HepG2 (cell line): ENCODE measurements at regions of chr5 and their contacts with region 1.

Region 1: GRCh38 chr5:65481635-65482295 is at the start of gene ADAMTS6:
- DNase-seq: peak; percentile 70
- ATAC-seq: peak; percentile 86
- H3K4me3 ChIP-seq: peak within 1 kb of the TSS; percentile 61 to 73 (median 67)
- H3K27ac ChIP-seq: peak within 1 kb of the TSS; percentile 56
- H3K4me1 ChIP-seq: peaks cover 17% of the 10 kb centered on the region
- H3K27me3 ChIP-seq: no peaks in the 10 kb centered on the region; a peak in 1 of 5 replicates
- CTCF ChIP-seq: no peak
- EP300 ChIP-seq: no peak
- POLR2A ChIP-seq: peak in 1 of 2 experiments; percentile 24; a peak in 1 of 4 replicates
- RAD21 ChIP-seq: no peak
- total RNA-seq, gene ADAMTS6: 0.93 and 3.1 TPM in 2 replicates

Region 2: GRCh38 chr5:64811050-64811640 is 670.6 kb before region 1 on chr5:
- CTCF ChIA-PET with region 1: interaction called, 10 read pairs
- POLR2A ChIA-PET with region 1: no interaction called
- in situ Hi-C with region 1: loop called (anchors 5 kb)
- intact Hi-C with region 1: loop called (anchors 1 kb)
- DNase-seq: peak; percentile 57
- ATAC-seq: peak; percentile 44; the same call in 1 of the 3 replicates
- H3K4me3 ChIP-seq: no peak overlapping the region
- H3K27ac ChIP-seq: no peak overlapping the region
- H3K4me1 ChIP-seq: no peaks in the 10 kb centered on the region
- H3K27me3 ChIP-seq: no peaks in the 10 kb centered on the region
- CTCF ChIP-seq: peak; percentile 74
- EP300 ChIP-seq: no peak
- POLR2A ChIP-seq: no peak
- RAD21 ChIP-seq: 0 out of 2 replicates have a peak, but pooled peaks have one; percentile 18

Region 3: GRCh38 chr5:65035211-65036206 is 446.3 kb before region 1 on chr5:
- CTCF ChIA-PET with region 1: no interaction called
- POLR2A ChIA-PET with region 1: no interaction called
- in situ Hi-C with region 1: no loop called
- intact Hi-C with region 1: loop called (anchors 5 kb)
- DNase-seq: peak; percentile 68
- ATAC-seq: peak; percentile 93
- H3K4me3 ChIP-seq: peak overlapping the region; percentile 62 to 77 (median 71)
- H3K27ac ChIP-seq: peak overlapping the region; percentile 20
- H3K4me1 ChIP-seq: peaks cover 36% of the 10 kb centered on the region
- H3K27me3 ChIP-seq: no peaks in the 10 kb centered on the region; a peak in 2 of 5 replicates
- CTCF ChIP-seq: no peak
- EP300 ChIP-seq: no peak
- POLR2A ChIP-seq: peak; percentile 30 to 47; a peak in 3 of 4 replicates
- RAD21 ChIP-seq: 0 out of 2 replicates have a peak, but pooled peaks have one; percentile 8

Region 4: GRCh38 chr5:65102828-65103711 is 378.7 kb before region 1 on chr5:
- CTCF ChIA-PET with region 1: interaction called, 33 read pairs
- POLR2A ChIA-PET with region 1: interaction called, 24 read pairs
- in situ Hi-C with region 1: loop called (anchors 5 kb)
- intact Hi-C with region 1: loop called (anchors 1 kb)
- DNase-seq: peak; percentile 35
- ATAC-seq: peak; percentile 79
- H3K4me3 ChIP-seq: peak overlapping the region; percentile 75 to 77 (median 76)
- H3K27ac ChIP-seq: peak overlapping the region; percentile 46
- H3K4me1 ChIP-seq: peaks cover 21% of the 10 kb centered on the region
- H3K27me3 ChIP-seq: peaks cover 1 to 28% of the 10 kb centered on the region in 2 experiments; a peak in 3 of 5 replicates
- CTCF ChIP-seq: peak; percentile 51
- EP300 ChIP-seq: no peak
- POLR2A ChIP-seq: no peak
- RAD21 ChIP-seq: no peak; the same call in 1 of the 2 replicates

Region 5: GRCh38 chr5:65326922-65327321 is 154.8 kb before region 1 on chr5:
- CTCF ChIA-PET with region 1: no interaction called
- POLR2A ChIA-PET with region 1: no interaction called
- in situ Hi-C with region 1: no loop called
- intact Hi-C with region 1: loop called (anchors 5 kb)
- DNase-seq: no peak
- ATAC-seq: no peak
- H3K4me3 ChIP-seq: no peak overlapping the region
- H3K27ac ChIP-seq: no peak overlapping the region
- H3K4me1 ChIP-seq: peaks cover 39% of the 10 kb centered on the region
- H3K27me3 ChIP-seq: no peaks in the 10 kb centered on the region
- CTCF ChIP-seq: no peak
- EP300 ChIP-seq: no peak
- POLR2A ChIP-seq: no peak
- RAD21 ChIP-seq: no peak